ENCODE measurements at regions of chr17 and their contacts with region 1.

Region 1: GRCh38 chr17:18038861-18039534 is at the starts of genes ATPAF2 and GID4:
- DNase-seq: peak; percentile 99
- ATAC-seq: peak; percentile 88 to 94
- H3K4me3 ChIP-seq: peak within 1 kb of the TSS; percentile 79 to 95 (median 88)
- H3K27ac ChIP-seq: peak within 1 kb of the TSS; percentile 87 to 94 (median 92)
- H3K4me1 ChIP-seq: peaks cover 34 to 45% of the 10 kb centered on the region in 2 donors
- H3K27me3 ChIP-seq: no peaks in the 10 kb centered on the region
- CTCF ChIP-seq: peak in 1 of 5 experiments; percentile 15
- POLR2A ChIP-seq: peak; percentile 64 to 73
- total RNA-seq, gene ATPAF2: 12.6 to 19.9 (median 16.2) TPM
- total RNA-seq, gene GID4: 40.1 to 46.4 (median 41.4) TPM

Region 2: GRCh38 chr17:17675925-17676534 is 363.0 kb before region 1 on chr17:
- in situ Hi-C with region 1: loop called (anchors 10 kb)
- intact Hi-C with region 1: no loop called
- DNase-seq: no peak
- ATAC-seq: no peak
- H3K4me3 ChIP-seq: no peak overlapping the region
- H3K27ac ChIP-seq: no peak overlapping the region
- H3K4me1 ChIP-seq: peaks cover 3 to 7% of the 10 kb centered on the region in 2 donors
- H3K27me3 ChIP-seq: no peaks in the 10 kb centered on the region
- CTCF ChIP-seq: no peak
- POLR2A ChIP-seq: no peak

Region 3: DNA sequence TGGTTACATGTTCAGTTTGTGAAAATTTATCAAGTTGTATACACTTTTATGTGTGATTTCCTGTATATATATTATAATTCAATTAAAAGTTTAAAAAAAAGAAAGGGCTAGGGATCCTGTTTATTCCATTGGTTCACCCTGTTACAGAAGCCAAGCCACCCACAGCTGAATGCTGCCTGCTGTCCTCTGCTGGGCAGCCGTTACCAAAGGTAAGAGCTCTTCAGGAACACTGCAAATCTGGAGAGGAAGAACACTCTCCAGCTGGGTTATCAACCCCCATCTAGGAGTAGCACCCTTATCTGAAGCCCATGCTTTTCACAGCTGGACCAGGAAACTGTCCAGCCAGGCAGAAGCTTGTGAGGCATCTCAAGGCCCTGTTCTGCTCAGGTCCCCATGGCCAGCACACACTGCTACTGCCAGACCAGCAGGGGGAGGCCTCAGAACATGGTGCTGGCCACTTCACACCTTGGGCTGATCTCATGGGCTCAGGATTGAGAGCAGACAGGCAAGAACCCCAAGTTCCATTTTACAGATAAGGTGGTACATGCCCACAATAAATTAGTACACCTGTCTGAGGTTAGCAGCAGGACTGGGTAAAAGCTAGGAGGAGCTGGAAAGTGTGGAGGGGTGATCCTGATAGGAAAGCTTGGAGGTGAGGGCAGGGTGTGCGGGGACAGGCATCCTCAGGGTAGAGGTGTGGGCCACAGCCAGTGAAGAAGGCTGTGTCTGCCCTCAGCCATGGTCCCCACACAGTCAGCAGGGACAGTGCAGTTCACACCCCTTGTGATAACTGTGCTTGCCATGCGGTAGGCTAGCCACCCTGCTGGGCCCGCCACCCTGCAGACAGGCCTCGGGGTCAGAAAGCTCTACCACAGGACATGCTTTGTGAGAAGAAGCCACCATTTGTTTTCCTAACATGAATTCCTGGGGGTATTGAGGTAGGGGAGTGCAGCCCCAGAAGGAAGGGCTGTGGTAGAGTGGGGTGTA is 147.9 kb before region 1 on chr17:
- in situ Hi-C with region 1: loop called in 3 of 4 experiments (anchors 25 kb)
- intact Hi-C with region 1: no loop called
- DNase-seq: no peak
- ATAC-seq: peak in 1 of 2 donors; percentile 49
- H3K4me3 ChIP-seq: no peak overlapping the region
- H3K27ac ChIP-seq: no peak overlapping the region
- H3K4me1 ChIP-seq: peaks cover 10 to 11% of the 10 kb centered on the region in 2 donors
- H3K27me3 ChIP-seq: no peaks in the 10 kb centered on the region
- CTCF ChIP-seq: peak; percentile 46 to 68 (median 63)
- POLR2A ChIP-seq: no peak

Region 4: GRCh38 chr17:17935321-17936271 is 103.4 kb before region 1 on chr17:
- in situ Hi-C with region 1: loop called in 1 of 4 experiments (anchors 25 kb)
- intact Hi-C with region 1: no loop called
- DNase-seq: peak; percentile 22 to 41
- ATAC-seq: peak; percentile 40 to 65
- H3K4me3 ChIP-seq: no peak overlapping the region
- H3K27ac ChIP-seq: no peak overlapping the region
- H3K4me1 ChIP-seq: peaks cover 54 to 56% of the 10 kb centered on the region in 2 donors
- H3K27me3 ChIP-seq: no peaks in the 10 kb centered on the region
- CTCF ChIP-seq: no peak
- POLR2A ChIP-seq: no peak

Region 5: DNA sequence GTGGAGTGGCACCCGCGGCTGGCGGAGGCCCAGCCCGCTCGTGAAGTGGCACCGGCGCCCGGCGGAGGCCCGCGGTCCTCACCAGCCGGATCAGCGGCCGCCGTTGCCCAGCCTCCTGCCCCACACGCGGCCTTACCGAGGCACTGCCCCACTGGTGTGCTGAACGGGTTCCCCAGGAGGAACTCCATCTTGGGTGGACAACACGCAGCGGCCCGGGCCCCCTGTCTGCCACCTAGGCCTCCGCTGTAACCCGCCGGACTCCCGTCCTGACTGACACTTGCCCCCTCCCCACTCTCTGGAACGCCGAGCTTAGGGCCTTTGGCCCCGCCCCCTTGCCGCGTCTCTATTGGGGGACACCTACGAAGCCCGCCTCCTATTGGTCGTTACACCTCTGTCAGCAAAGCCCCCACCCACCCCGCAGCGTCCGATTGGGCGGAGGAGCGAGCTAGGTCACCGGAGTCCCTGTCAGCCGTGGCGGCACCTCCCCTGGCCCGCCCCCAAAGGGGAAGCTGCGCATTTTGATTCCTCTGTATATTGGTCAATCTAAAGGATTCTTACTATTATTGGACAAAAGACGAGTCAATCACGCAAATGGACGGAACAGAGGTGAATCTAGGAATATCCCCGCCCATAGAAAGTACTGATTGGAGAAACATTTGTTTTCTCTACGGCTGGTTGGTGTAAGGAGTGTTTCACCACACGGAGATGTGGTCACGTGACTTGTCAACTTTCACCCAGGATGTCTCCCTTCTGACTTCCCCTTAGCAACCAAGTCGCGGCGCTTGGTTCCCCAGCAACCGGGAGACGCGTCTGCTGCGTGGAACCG is 66.7 kb before region 1 on chr17 and contains the starts of genes DRC3 and TOM1L2:
- in situ Hi-C with region 1: loop called in 1 of 4 experiments (anchors 10 kb)
- intact Hi-C with region 1: loop called (anchors 1 kb)
- DNase-seq: peak; percentile 100
- ATAC-seq: peak; percentile 98
- H3K4me3 ChIP-seq: peak within 1 kb of the TSS; percentile 76 to 95 (median 90)
- H3K27ac ChIP-seq: peak within 1 kb of the TSS; percentile 87 to 97 (median 97)
- H3K4me1 ChIP-seq: peaks cover 23 to 27% of the 10 kb centered on the region in 2 donors
- H3K27me3 ChIP-seq: no peaks in the 10 kb centered on the region
- CTCF ChIP-seq: peak; percentile 10 to 57 (median 25)
- POLR2A ChIP-seq: peak; percentile 96 to 98
- total RNA-seq, gene DRC3: 0.05 to 0.81 (median 0.28) TPM
- total RNA-seq, gene TOM1L2: 55.7 to 97.1 (median 73.3) TPM